Mammary epithelial cell (primary cell): ENCODE measurements at regions of chr4 and their contacts with region 1.

Region 1: DNA sequence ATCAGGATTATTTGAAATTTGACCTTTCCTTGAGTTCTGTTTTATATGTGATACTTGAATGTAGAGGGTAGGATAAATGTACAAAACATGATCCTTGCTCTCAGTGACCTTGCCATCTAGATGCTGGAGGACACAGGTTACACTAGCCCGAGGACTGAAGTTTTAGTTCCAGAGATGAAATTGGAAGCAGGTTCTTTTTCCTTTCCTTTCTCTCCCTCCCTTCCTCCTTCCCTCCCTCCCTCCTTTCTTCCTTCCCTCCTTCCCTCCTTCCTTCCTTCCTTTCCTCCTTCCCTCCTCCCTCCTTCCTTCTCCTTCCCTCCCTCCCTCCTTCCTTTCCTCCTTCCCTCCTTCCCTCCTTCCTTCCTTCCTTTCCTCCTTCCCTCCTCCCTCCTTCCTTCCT is 54.3 kb downstream of the LRRC66 start:
- DNase-seq: no peak
- H3K4me3 ChIP-seq: no peak overlapping the region
- H3K27ac ChIP-seq: no peak overlapping the region
- H3K4me1 ChIP-seq: peaks cover 2% of the 10 kb centered on the region
- H3K27me3 ChIP-seq: no peaks in the 10 kb centered on the region
- CTCF ChIP-seq: no peak

Region 2: DNA sequence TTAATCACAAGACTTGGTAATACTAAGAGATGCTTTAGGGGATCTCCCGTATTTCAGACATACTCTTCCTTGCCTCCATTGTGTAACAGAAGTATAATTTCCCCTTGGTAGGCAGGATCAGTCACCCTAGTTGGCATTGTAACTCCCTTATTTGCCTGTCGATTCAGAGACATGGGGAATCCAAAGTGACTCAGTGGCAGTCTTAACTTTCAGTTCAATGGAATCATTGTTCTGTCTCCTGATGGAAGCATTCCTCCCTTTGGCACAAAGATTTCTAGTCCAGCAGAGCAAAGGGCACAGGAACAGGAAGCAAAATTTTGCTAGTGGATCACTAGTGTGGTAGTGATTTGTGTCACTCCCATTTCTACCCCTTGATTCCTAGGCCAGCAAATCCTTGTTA is 42.5 kb before region 1 on chr4:
- CTCF ChIA-PET with region 1: no interaction called
- dilution Hi-C with region 1: no loop called
- in situ Hi-C with region 1: no loop called
- intact Hi-C with region 1: loop called (anchors 5 kb)
- DNase-seq: peak; percentile 82
- H3K4me3 ChIP-seq: no peak overlapping the region
- H3K27ac ChIP-seq: no peak overlapping the region
- H3K4me1 ChIP-seq: no peaks in the 10 kb centered on the region
- H3K27me3 ChIP-seq: no peaks in the 10 kb centered on the region
- CTCF ChIP-seq: no peak